ENCODE measurements at regions of chr3 and their contacts with region 1.

Region 1: GRCh38 chr3:67113802-67114407 is 115.8 kb downstream of the KBTBD8 start:
- DNase-seq: peak; percentile 76
- ATAC-seq: peak; percentile 82
- H3K4me3 ChIP-seq: no peak overlapping the region
- H3K27ac ChIP-seq: no peak overlapping the region
- H3K4me1 ChIP-seq: no peaks in the 10 kb centered on the region
- H3K27me3 ChIP-seq: no peaks in the 10 kb centered on the region
- CTCF ChIP-seq: peak; percentile 82

Region 2: GRCh38 chr3:66138336-66139313 is 975.3 kb before region 1 on chr3:
- CTCF ChIA-PET with region 1: no interaction called
- POLR2A ChIA-PET with region 1: no interaction called
- intact Hi-C with region 1: no loop called
- DNase-seq: peak; percentile 68
- ATAC-seq: peak; percentile 81
- H3K4me3 ChIP-seq: no peak overlapping the region
- H3K27ac ChIP-seq: no peak overlapping the region
- H3K4me1 ChIP-seq: peaks cover 2% of the 10 kb centered on the region
- H3K27me3 ChIP-seq: no peaks in the 10 kb centered on the region
- CTCF ChIP-seq: peak; percentile 66

Region 3: DNA sequence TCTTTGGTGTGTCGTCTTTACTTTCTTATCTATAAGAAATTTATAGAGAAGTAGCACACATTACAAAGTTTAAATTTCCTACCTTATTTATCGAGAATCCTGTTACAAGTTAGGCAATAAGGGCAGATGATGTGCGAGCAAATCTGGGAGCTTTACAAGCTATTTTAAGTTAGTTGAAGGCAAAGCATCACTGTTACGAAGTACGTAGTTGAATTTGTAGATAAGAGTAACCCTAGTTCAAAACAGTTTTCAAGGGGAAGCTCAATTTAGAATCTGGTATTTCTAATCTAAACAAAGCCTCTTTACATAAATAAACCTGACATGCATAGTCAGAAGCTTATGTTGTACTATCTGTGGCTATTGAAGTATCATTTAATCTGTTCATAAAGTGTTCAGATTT is 107.4 kb before region 1 on chr3:
- CTCF ChIA-PET with region 1: no interaction called
- POLR2A ChIA-PET with region 1: no interaction called
- intact Hi-C with region 1: no loop called
- DNase-seq: no peak
- ATAC-seq: no peak
- H3K4me3 ChIP-seq: no peak overlapping the region
- H3K27ac ChIP-seq: no peak overlapping the region
- H3K4me1 ChIP-seq: no peaks in the 10 kb centered on the region
- H3K27me3 ChIP-seq: no peaks in the 10 kb centered on the region
- CTCF ChIP-seq: no peak

Region 4: DNA sequence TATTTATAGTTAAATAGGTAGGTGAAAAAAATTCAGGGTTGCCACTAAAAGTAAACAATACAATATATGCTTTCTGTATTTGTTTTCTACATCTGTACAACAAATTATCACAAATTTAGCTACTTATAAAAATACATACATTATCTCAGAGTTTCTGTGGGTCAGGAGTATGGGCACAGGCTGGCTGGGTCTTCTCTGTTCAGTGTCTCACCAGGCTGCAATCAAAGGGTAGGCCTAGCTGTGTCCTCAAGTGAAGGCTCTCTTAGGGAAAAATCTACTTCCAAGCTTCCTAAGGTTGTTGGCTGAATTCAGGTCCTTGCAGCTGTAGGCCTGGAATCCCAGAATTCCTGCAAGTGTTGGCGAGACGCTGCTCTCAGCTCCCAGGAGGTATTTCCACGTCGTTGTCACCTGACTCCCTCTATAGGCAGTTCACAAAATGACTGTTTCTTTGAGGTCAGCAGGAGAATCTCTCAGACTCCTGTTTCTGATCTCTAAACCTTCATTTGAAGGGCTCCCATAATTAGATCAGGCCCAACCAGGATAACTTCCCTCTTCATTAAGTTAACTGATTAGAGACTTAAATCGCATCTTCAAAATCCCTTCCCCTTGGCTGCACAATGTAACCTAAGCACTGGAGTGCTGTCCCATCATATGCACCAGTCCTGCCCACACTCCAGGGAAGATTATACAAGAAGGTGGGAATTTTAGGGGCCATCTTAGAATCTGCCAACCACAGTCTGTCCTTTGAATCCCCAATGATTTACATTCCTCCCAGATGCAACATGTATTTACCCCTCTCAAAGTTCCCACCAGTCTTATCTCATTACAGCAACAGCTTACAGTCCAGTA is 243.9 kb after region 1 on chr3:
- CTCF ChIA-PET with region 1: interaction called, 9 read pairs
- POLR2A ChIA-PET with region 1: no interaction called
- intact Hi-C with region 1: loop called (anchors 5 kb)
- DNase-seq: peak; percentile 48
- ATAC-seq: peak; percentile 84
- H3K4me3 ChIP-seq: no peak overlapping the region
- H3K27ac ChIP-seq: no peak overlapping the region
- H3K4me1 ChIP-seq: peaks cover 7% of the 10 kb centered on the region; the same call in 1 of the 2 replicates
- H3K27me3 ChIP-seq: no peaks in the 10 kb centered on the region
- CTCF ChIP-seq: peak; percentile 49

Region 5: DNA sequence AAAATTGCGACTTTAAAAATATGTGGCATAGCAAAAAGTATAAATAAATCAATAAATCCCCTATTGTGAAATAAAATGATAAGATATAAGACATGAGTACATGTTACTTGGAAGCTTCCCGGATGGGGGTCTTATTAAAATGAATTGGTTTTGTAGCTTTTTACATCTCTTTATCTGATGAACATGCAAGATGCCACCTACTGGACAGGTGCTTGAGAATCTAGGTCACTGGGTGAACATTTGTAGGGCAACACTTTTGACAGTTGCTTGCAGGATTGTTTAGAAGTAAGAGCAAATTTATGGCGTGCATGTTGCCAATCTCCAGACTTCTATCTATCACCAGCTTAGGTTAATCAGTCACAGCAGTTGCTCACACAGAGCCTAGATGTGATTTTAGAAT is 903.2 kb after region 1 on chr3:
- CTCF ChIA-PET with region 1: no interaction called
- POLR2A ChIA-PET with region 1: no interaction called
- intact Hi-C with region 1: loop called (anchors 5 kb)
- DNase-seq: peak; percentile 7
- ATAC-seq: no peak
- H3K4me3 ChIP-seq: no peak overlapping the region
- H3K27ac ChIP-seq: no peak overlapping the region
- H3K4me1 ChIP-seq: no peaks in the 10 kb centered on the region
- H3K27me3 ChIP-seq: no peaks in the 10 kb centered on the region
- CTCF ChIP-seq: peak; percentile 46

Region 6: GRCh38 chr3:68876112-68876713 is 1762.3 kb after region 1 on chr3:
- CTCF ChIA-PET with region 1: interaction called, 7 read pairs
- POLR2A ChIA-PET with region 1: no interaction called
- intact Hi-C with region 1: loop called (anchors 1 kb)
- DNase-seq: peak; percentile 66
- ATAC-seq: peak; percentile 66
- H3K4me3 ChIP-seq: no peak overlapping the region
- H3K27ac ChIP-seq: no peak overlapping the region
- H3K4me1 ChIP-seq: no peaks in the 10 kb centered on the region
- H3K27me3 ChIP-seq: peaks cover 8% of the 10 kb centered on the region; the same call in 1 of the 2 replicates
- CTCF ChIP-seq: peak; percentile 66

Region 7: DNA sequence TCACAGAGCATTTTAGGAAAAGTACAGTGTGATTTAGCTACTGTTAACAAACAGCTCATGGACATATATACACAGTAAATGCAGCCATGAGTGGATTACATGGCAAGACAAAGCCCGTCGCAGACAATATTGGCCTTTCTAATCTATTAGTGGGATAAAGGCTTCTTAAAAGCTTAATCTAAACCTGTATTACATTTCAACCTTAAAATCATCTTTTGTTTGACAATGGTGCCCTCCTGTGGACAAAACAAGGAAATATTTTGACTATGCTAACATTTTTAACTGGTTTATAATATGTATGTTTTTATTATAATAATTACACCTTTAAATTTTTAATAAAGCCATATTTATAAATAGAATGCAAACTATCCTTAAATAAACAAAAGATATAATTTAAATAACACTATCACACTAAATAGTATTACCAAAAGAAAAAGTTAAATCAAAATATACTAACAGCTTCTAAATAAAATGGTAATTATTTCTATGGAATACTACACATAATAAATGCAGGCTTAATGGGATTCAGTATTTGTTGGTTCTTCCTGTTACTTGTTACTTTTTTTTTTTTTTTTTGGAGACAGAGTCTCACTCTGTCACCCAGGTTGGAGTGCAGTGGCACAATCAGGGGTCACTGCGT is 1779.8 kb after region 1 on chr3:
- CTCF ChIA-PET with region 1: no interaction called
- POLR2A ChIA-PET with region 1: no interaction called
- intact Hi-C with region 1: loop called (anchors 5 kb)
- DNase-seq: peak; percentile 49
- ATAC-seq: no peak
- H3K4me3 ChIP-seq: no peak overlapping the region
- H3K27ac ChIP-seq: no peak overlapping the region
- H3K4me1 ChIP-seq: no peaks in the 10 kb centered on the region
- H3K27me3 ChIP-seq: peaks cover 8% of the 10 kb centered on the region; the same call in 1 of the 2 replicates
- CTCF ChIP-seq: 0 out of 2 replicates have a peak, but pooled peaks have one; percentile 19

Measured in PC-3 (cell line).